Sigmoid colon (tissue), 7 donors: ENCODE measurements at regions of chr1 and their contacts with region 1.

Region 1: GRCh38 chr1:230792691-230793665 is 45.8 kb downstream of the CAPN9 start:
- DNase-seq: no peak
- H3K4me3 ChIP-seq: no peak overlapping the region
- H3K27ac ChIP-seq: no peak overlapping the region
- H3K4me1 ChIP-seq: no peaks in the 10 kb centered on the region
- H3K27me3 ChIP-seq: no peaks in the 10 kb centered on the region
- CTCF ChIP-seq: no peak
- EP300 ChIP-seq: no peak
- POLR2A ChIP-seq: no peak

Region 2: DNA sequence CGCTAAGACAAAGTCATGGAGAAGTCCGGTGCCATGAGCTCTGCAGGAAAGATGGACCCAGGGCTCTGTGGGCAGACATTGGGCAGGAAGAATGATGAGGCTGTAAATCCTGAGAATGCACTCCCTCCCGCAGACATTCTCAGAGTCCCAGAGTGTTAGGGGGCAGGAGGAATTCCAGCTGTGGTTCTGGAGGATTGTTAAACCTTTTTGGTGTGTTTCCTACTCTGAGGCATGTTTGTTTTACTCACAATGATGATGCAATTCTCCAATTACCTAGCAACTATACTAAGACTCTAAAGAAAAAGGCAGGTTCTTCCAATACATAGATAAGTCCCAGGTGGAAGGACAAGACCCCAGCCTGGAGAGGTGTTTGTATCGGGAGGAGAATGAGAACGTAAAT is 48.6 kb before region 1 on chr1:
- intact Hi-C with region 1: loop called (anchors 5 kb)
- DNase-seq: no peak
- H3K4me3 ChIP-seq: no peak overlapping the region
- H3K27ac ChIP-seq: no peak overlapping the region
- H3K4me1 ChIP-seq: no peaks in the 10 kb centered on the region
- H3K27me3 ChIP-seq: no peaks in the 10 kb centered on the region
- CTCF ChIP-seq: no peak
- EP300 ChIP-seq: no peak
- POLR2A ChIP-seq: no peak

Region 3: DNA sequence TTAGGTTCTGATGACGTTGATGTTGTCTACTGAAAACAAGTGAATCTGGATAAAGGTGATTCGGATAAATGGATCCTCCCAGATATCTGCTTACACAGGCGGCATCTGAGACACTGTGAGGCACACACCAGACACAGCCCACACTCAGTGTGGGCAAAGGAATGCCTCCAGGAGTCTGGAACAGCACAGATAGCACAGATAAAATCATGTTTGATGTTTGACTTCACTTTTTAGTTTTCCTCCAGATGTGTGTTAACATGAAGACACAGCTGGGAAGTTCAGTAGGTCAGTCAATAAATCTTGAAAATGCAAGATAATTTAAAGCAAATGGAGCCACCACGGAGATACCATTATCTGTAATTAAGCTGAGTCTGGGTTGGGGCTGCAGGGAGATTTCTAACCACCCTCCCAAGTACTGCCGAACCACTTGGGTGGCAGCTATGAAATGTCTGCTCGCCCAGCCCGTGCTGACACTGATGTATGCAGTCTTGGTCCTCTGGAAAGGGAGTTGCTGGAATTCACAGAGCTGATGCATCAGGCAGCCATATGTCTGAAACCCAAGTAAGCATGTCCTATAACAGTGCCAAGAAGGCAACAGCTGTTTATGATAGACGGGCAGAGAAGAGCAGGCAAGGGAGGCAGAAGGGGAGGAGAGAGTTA is 34.1 kb before region 1 on chr1:
- intact Hi-C with region 1: no loop called
- DNase-seq: no peak
- H3K4me3 ChIP-seq: no peak overlapping the region
- H3K27ac ChIP-seq: no peak overlapping the region
- H3K4me1 ChIP-seq: peaks cover 0 to 6% (median 3%) of the 10 kb centered on the region in 4 donors
- H3K27me3 ChIP-seq: no peaks in the 10 kb centered on the region
- CTCF ChIP-seq: no peak
- EP300 ChIP-seq: no peak
- POLR2A ChIP-seq: no peak

Region 4: GRCh38 chr1:231091831-231092301 is 298.9 kb after region 1 on chr1:
- intact Hi-C with region 1: no loop called
- DNase-seq: no peak
- H3K4me3 ChIP-seq: no peak overlapping the region
- H3K27ac ChIP-seq: no peak overlapping the region
- H3K4me1 ChIP-seq: no peaks in the 10 kb centered on the region
- H3K27me3 ChIP-seq: peaks cover 0 to 7% (median 0%) of the 10 kb centered on the region in 3 donors
- CTCF ChIP-seq: no peak
- EP300 ChIP-seq: no peak
- POLR2A ChIP-seq: no peak